ENCODE measurements at regions of chr19 and their contacts with region 1.

Region 1: DNA sequence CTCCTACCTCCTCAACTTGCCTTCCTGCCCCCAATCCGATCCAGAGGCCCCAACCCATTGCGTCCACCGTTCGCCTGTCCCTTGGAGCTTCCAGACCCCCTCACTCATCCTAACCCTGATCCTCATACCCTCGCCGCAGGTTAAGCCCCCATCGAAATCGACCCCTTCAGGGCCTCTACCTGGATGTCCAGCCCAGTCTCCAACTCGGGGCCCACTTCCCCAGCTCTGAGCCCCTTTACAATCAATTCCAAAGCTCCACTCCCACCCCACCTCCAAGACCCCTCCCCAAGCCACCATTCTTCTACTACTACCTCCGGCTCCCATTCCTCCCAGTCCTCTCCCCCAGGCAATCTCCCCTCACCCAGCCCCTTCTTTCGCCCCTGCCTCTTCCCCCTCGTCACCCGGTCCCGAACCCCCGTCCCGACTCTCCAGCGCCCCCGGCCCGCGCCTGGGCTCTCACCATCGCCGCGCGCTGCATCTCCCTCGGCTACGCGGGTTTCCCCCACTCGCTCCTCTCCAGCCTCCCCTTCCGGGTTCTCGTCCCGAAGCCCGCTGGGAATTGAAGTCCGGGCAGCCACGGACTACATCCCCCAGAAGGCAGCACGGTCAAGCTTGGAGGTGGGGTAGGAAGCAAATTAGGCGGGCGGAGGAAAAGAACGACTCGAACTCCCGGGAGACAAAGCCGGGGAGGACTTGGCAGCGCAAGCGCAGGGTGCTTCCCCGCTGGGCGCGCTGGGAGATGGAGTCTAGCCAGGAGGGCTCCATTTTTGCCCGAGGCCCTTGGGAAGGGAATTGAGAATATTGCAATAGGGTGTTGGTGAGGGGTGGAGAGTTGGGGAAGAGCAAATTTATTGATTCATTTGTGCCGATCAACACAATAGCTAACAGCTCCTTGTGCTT is at the start of gene FBXO46:
- DNase-seq: peak; percentile 99
- H3K4me3 Mint-ChIP-seq: peak within 1 kb of the TSS; percentile 95
- H3K27ac Mint-ChIP-seq: peak within 1 kb of the TSS; percentile 83
- H3K4me1 Mint-ChIP-seq: peaks cover 29% of the 10 kb centered on the region
- H3K27me3 Mint-ChIP-seq: no peaks in the 10 kb centered on the region
- total RNA-seq, gene FBXO46: 21.8 to 23.2 TPM

Region 2: DNA sequence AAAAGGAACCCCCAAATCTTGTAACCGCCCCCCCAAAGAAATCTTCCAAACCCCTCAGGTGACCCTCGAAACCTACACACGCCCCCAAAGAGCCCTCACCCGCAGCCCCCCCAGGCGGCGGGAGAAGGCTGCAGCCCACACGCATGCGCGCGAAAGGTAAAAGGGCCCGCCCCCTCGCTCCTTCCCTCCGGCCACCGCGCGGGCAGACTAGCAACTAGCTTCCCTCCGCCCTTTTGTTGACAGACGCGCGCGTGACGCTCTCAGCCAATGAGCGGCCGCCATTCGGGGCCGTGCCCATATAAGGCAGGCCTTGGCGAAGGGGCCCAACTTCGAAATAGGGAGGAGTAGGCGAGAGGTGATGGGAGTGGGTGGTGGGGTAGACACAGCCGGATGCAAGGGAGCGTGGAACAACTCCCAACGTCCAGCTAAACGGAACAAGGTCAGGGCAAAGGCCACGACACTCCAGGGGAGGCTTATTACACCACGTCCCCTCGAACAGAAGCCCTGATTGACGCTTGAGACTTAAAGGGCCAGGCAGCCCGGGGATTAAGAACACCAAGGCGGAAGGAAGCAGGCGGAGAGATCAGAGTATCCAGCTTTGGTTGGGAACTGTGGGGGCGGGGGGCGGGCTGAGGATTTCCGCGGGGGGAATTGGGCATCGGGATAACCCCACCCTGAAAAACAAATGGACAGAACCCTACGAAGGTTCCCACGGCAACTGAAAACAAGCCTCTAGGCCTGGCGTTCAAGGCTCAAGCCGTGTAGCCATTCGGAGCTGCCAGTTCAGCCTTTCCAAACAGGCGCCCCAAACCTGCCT is 13.3 kb before region 1 on chr19:
- CTCF ChIA-PET with region 1: interaction called, 13 read pairs
- intact Hi-C with region 1: loop called (anchors 1 kb)
- DNase-seq: peak; percentile 99
- H3K4me3 Mint-ChIP-seq: peak overlapping the region; percentile 96
- H3K27ac Mint-ChIP-seq: peak overlapping the region; percentile 97
- H3K4me1 Mint-ChIP-seq: peaks cover 41% of the 10 kb centered on the region
- H3K27me3 Mint-ChIP-seq: no peaks in the 10 kb centered on the region

Region 3: GRCh38 chr19:45753546-45753945 is 22.9 kb after region 1 on chr19:
- CTCF ChIA-PET with region 1: no interaction called
- intact Hi-C with region 1: no loop called
- DNase-seq: no peak
- H3K4me3 Mint-ChIP-seq: no peak overlapping the region
- H3K27ac Mint-ChIP-seq: no peak overlapping the region
- H3K4me1 Mint-ChIP-seq: no peaks in the 10 kb centered on the region
- H3K27me3 Mint-ChIP-seq: no peaks in the 10 kb centered on the region

Region 4: DNA sequence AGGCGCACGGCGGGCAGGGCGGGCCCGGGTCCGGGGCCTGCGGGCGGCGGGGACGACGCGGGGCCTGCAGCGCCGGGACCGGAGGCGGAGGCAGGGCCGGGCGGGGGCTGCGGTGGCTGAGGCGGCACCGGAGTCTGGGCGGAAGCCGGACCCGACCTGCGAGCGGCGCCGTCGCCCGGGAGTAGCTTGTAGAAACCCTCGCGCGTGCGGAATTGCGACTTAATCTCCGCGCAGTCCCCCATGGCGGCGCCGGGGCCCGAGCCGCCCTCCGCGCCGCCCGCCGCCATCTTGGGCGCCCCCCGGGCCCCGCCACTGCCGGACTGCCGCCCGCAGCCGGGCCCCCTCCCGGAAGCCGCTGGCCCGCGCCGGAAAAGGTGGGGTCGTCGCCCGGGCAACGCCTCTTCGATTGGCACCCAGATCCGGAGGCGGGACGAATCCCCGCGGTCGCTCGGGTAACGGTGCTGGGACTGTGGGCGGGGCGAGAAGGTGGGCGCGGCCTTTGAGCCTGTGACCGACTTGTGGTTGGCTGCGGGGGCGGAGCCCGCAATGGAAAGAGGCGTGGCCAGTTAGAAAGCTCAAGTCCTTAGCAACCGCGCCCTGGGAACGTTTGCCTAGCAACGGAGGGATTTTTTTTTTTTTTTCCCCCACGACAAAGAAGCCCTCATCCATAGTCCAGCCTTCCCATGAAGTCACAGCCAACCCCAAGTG is 62.0 kb after region 1 on chr19 and contains the start of gene DMWD:
- CTCF ChIA-PET with region 1: no interaction called
- intact Hi-C with region 1: loop called (anchors 2 kb)
- DNase-seq: peak; percentile 100
- H3K4me3 Mint-ChIP-seq: peak within 1 kb of the TSS; percentile 93
- H3K27ac Mint-ChIP-seq: peak within 1 kb of the TSS; percentile 71
- H3K4me1 Mint-ChIP-seq: peaks cover 24% of the 10 kb centered on the region
- H3K27me3 Mint-ChIP-seq: peaks cover 13% of the 10 kb centered on the region
- total RNA-seq, gene DMWD: 28.6 to 29.1 TPM

Region 5: DNA sequence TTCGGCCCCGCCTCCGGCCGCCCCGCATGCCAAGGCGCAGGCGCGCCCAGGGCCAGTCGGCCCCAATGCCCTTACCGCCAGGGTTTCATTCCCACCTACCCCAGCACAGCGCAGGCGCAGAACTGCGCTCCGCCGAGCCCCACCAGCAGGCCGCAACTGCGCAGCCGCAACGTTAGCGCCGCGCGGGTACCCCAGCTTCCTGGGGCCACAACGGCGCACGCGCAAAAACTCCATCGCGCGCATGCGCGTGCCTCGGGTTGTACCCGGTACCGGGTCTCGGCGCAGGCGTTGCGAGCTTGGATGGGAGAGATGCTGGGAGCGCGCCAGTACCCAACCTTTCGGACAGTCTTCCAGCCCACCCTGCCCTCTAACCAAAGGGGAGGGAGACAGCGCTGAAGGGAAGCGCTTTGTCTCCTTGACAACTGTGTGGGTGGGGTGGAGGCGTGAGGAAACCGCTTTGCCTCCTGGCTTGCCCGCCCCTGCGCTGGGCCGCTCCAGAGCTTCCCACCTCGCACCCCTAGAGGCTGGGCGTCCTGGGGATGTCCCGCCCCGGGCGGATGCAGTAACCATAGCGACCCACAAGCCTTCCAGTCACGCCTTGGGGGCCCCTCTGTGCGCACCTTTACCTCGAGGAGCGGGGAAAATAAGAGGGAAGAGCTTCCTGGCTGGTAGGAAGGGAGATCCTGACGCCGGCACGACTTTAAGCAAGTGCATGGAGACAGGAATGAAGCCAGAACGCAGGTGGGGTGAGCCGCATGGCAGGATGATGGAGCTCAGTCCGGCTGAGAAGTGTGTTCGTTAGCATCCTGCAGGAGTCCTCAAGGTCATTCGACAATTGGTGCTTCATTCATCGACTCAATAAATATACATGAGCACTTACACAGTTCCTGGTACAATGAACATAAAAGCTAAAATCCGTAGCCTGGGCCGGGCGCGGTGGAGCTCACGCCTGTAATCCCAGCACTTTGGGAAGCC is 172.3 kb after region 1 on chr19:
- CTCF ChIA-PET with region 1: no interaction called
- intact Hi-C with region 1: loop called (anchors 5 kb)
- DNase-seq: peak; percentile 99
- H3K4me3 Mint-ChIP-seq: peak overlapping the region; percentile 88
- H3K27ac Mint-ChIP-seq: peak overlapping the region; percentile 71
- H3K4me1 Mint-ChIP-seq: peaks cover 12% of the 10 kb centered on the region
- H3K27me3 Mint-ChIP-seq: no peaks in the 10 kb centered on the region

Measured in activated naive CD4-positive, alpha-beta T cell treated with anti-CD3 and anti-CD28 coated beads for 36 hours (primary cell).